ENCODE measurements at regions of chr19 and their contacts with region 1.

Region 1: DNA sequence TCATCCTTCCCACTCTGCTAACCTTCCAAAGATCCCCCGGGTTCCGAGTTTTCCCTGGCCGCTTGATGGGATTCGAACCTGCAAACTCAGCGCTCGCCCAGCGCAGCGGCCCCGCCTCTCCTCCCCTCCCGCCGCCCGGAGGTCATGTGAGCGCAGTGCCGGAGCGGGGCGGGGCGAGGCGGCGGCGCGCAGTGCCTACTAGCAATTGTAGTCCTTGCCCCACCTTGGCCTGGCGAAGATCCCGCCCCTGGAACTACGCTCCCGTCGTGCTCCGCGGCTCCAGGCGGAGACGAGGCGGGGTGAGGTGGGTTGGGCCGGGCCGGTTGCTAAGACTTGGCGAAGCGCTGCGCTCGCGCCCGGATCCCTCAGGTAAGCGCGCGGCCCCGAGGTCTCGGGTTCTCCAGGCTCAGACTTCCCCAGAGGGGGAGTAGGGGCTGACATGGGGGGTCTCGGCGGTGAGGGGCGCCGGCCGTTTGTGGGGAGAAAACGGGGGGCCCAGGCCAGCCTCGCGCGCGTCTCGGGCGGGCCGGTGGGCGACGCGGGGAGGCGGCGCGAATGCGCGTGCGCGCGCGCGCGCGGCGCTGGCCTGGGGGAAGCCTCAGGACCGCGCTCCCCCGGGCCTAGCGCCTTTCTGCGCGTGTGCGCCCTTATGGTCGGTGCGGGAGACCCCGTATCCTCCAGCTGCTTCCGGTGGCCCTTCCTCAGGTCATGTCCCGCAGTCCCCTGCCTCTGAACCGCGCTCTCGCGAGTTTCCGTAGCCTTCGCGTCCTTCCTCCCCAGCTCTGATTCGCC is at the starts of genes ADAT3 and SCAMP4:
- DNase-seq: peak; percentile 99
- H3K4me3 ChIP-seq: peak within 1 kb of the TSS; percentile 77
- H3K27ac ChIP-seq: peak within 1 kb of the TSS; percentile 95
- H3K4me1 ChIP-seq: peaks cover 17% of the 10 kb centered on the region
- H3K27me3 ChIP-seq: no peaks in the 10 kb centered on the region
- CTCF ChIP-seq: no peak
- total RNA-seq, gene ADAT3: 14.1 and 18.0 TPM in 2 replicates
- total RNA-seq, gene SCAMP4: 88.4 and 98.8 TPM in 2 replicates

Region 2: GRCh38 chr19:1917146-1917545 is 11.9 kb after region 1 on chr19:
- CTCF ChIA-PET with region 1: no interaction called
- POLR2A ChIA-PET with region 1: no interaction called
- intact Hi-C with region 1: no loop called
- DNase-seq: no peak
- H3K4me3 ChIP-seq: no peak overlapping the region
- H3K27ac ChIP-seq: no peak overlapping the region
- H3K4me1 ChIP-seq: no peaks in the 10 kb centered on the region
- H3K27me3 ChIP-seq: no peaks in the 10 kb centered on the region
- CTCF ChIP-seq: no peak

Region 3: GRCh38 chr19:1975162-1975480 is 69.9 kb after region 1 on chr19:
- CTCF ChIA-PET with region 1: no interaction called
- POLR2A ChIA-PET with region 1: no interaction called
- intact Hi-C with region 1: no loop called
- DNase-seq: no peak
- H3K4me3 ChIP-seq: no peak overlapping the region
- H3K27ac ChIP-seq: no peak overlapping the region
- H3K4me1 ChIP-seq: peaks cover 5% of the 10 kb centered on the region
- H3K27me3 ChIP-seq: no peaks in the 10 kb centered on the region
- CTCF ChIP-seq: no peak

Region 4: DNA sequence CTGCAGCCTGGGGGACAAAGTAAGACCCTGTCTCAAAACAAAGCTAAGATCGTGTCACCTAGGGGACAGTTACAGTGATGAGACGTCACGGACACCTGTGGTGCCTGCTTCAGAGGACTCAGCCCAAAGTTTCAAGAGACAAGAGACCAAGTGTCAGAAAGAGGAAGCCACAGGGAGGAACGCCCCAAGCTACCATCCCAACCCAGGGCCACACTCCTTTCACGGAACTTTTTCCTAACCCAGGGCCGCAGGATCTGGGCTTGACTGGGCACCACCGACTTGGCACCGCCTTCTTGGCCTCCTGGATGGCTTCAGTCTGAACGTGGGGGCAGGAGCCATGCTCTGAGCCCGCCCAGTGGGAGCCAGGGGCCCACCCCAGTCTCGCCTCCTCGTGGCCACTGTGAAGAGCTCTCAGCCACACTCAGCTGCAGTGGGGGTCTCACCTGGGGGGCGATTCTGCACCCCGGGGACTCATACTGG is 182.4 kb after region 1 on chr19:
- CTCF ChIA-PET with region 1: no interaction called
- POLR2A ChIA-PET with region 1: interaction called, 10 read pairs
- intact Hi-C with region 1: no loop called
- DNase-seq: no peak
- H3K4me3 ChIP-seq: no peak overlapping the region
- H3K27ac ChIP-seq: no peak overlapping the region
- H3K4me1 ChIP-seq: peaks cover 24% of the 10 kb centered on the region
- H3K27me3 ChIP-seq: no peaks in the 10 kb centered on the region
- CTCF ChIP-seq: no peak